ENCODE measurements at regions of chr12 and their contacts with region 1.

Region 1: GRCh38 chr12:810671-811415 is 58.5 kb downstream of the WNK1 start:
- DNase-seq: peak; percentile 74
- H3K4me3 Mint-ChIP-seq: no peak overlapping the region
- H3K27ac Mint-ChIP-seq: peak overlapping the region; percentile 57
- H3K4me1 Mint-ChIP-seq: peaks cover 41% of the 10 kb centered on the region
- H3K27me3 Mint-ChIP-seq: no peaks in the 10 kb centered on the region

Region 2: DNA sequence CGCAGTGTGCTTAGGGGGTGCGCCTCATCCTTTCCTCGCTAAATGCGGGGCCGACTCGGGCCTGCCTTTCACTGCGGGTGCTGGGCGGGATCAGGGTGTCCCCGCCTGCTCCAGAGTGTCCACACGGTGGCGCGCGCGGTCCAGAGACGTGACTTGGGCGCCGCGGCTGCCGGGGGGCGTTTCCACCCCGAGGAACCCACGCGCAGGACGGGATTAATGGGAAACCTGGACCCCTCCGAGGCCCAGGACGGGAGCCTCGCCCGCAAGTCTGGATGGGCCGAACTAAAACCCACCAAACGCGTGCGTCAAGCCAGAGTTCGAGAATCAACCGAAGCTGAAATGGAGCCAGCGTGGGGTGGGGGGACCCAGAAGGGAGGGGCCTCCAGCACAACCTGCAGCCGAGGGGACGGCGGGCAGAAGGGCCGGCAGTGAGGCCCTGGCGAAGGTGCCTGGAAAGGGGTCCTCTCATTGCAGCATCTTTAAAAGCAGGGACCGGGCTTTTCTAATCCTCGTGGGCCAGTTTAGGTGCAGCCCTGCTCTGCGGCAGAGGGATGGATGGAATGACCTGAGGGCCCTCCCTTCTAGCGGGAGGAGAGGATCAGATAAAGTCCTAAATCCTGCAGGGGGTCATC is 240.9 kb before region 1 on chr12:
- intact Hi-C with region 1: loop called (anchors 1 kb)
- DNase-seq: peak; percentile 96
- H3K4me3 Mint-ChIP-seq: peak overlapping the region; percentile 86
- H3K27ac Mint-ChIP-seq: peak overlapping the region; percentile 88
- H3K4me1 Mint-ChIP-seq: peaks cover 48% of the 10 kb centered on the region
- H3K27me3 Mint-ChIP-seq: no peaks in the 10 kb centered on the region

Region 3: DNA sequence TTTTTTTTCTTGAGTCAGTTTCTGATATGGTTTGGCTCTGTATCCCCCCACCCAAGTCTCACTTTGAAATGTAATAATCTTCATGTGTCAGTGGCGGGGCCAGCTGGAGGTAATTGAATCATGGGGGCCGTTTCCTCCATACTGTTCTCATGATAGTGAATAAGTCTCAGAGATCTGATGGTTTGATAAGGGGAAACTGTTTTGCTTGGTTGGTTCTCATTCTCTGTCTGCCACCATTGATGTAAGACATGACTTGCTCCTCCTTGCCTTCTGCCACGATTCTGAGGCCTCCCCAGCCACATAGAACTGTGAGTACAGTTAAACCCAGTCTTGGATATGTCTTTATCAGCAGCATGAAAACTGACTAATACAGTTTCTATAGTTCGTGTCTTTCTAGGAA is 15.5 kb before region 1 on chr12:
- intact Hi-C with region 1: loop called (anchors 1 kb)
- DNase-seq: peak; percentile 78
- H3K4me3 Mint-ChIP-seq: peak overlapping the region; percentile 68
- H3K27ac Mint-ChIP-seq: peak overlapping the region; percentile 94
- H3K4me1 Mint-ChIP-seq: peaks cover 58% of the 10 kb centered on the region
- H3K27me3 Mint-ChIP-seq: no peaks in the 10 kb centered on the region

Region 4: GRCh38 chr12:981176-981828 is 170.5 kb after region 1 on chr12:
- intact Hi-C with region 1: no loop called
- DNase-seq: no peak
- H3K4me3 Mint-ChIP-seq: no peak overlapping the region
- H3K27ac Mint-ChIP-seq: no peak overlapping the region
- H3K4me1 Mint-ChIP-seq: peaks cover 5% of the 10 kb centered on the region
- H3K27me3 Mint-ChIP-seq: peaks cover 2% of the 10 kb centered on the region

Region 5: GRCh38 chr12:1093166-1093751 is 282.4 kb after region 1 on chr12:
- intact Hi-C with region 1: loop called (anchors 10 kb)
- DNase-seq: peak; percentile 83
- H3K4me3 Mint-ChIP-seq: no peak overlapping the region
- H3K27ac Mint-ChIP-seq: no peak overlapping the region
- H3K4me1 Mint-ChIP-seq: peaks cover 12% of the 10 kb centered on the region
- H3K27me3 Mint-ChIP-seq: no peaks in the 10 kb centered on the region

Measured in activated CD4-positive, alpha-beta T cell treated with anti-CD3 and anti-CD28 coated beads, Interleukin-2, amount 10 ng/mL, durations not matched to agents 24 days and 14 days (primary cell).